B cell (primary cell): ENCODE measurements at regions of chr22 and their contacts with region 1.

Region 1: DNA sequence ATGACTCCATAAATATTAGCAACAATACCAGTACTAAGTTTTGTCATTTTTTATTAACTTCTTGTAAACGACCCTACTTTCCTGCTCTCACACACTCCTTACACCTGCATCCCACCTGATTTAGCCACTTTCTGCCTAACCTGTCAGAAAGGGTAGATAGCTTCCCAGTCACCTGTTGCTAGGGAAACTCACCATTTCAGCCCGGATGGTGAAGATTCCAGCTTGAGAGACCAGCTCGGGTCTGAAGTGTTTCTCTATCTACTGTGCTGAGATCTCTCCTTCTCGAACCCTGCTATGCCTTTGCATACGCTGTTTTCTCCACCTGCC is at the start of gene PARVG:
- DNase-seq: peak; percentile 86
- ATAC-seq: peak; percentile 67
- H3K4me3 ChIP-seq: peak within 1 kb of the TSS; percentile 70 to 98 (median 92)
- H3K4me3 Mint-ChIP-seq: peak within 1 kb of the TSS; percentile 94
- H3K27ac ChIP-seq: peak within 1 kb of the TSS; percentile 93 to 95
- H3K27ac Mint-ChIP-seq: peak within 1 kb of the TSS; percentile 95
- H3K4me1 ChIP-seq: peaks cover 19 to 39% of the 10 kb centered on the region in 2 donors
- H3K4me1 Mint-ChIP-seq: peaks cover 36% of the 10 kb centered on the region
- H3K27me3 ChIP-seq: no peaks in the 10 kb centered on the region
- H3K27me3 Mint-ChIP-seq: no peaks in the 10 kb centered on the region
- CTCF ChIP-seq: no peak
- total RNA-seq, gene PARVG: 247 and 271 TPM in 2 replicates

Region 2: GRCh38 chr22:42702675-42703074 is 1478.0 kb before region 1 on chr22:
- CTCF ChIA-PET with region 1: no interaction called
- POLR2A ChIA-PET with region 1: no interaction called
- intact Hi-C with region 1: no loop called
- DNase-seq: no peak
- ATAC-seq: no peak
- H3K4me3 ChIP-seq: no peak overlapping the region
- H3K4me3 Mint-ChIP-seq: no peak overlapping the region
- H3K27ac ChIP-seq: no peak overlapping the region
- H3K27ac Mint-ChIP-seq: no peak overlapping the region
- H3K4me1 ChIP-seq: no peaks in the 10 kb centered on the region
- H3K4me1 Mint-ChIP-seq: peaks cover 3% of the 10 kb centered on the region
- H3K27me3 ChIP-seq: peaks cover 0 to 14% (median 0%) of the 10 kb centered on the region in 4 experiments
- H3K27me3 Mint-ChIP-seq: peaks cover 4% of the 10 kb centered on the region
- CTCF ChIP-seq: no peak

Region 3: GRCh38 chr22:43812149-43812842 is 368.4 kb before region 1 on chr22 and contains the start of gene EFCAB6:
- CTCF ChIA-PET with region 1: no interaction called
- POLR2A ChIA-PET with region 1: no interaction called
- intact Hi-C with region 1: loop called (anchors 5 kb)
- DNase-seq: peak; percentile 94
- ATAC-seq: peak; percentile 95
- H3K4me3 ChIP-seq: peak within 1 kb of the TSS; percentile 39 to 92 (median 77)
- H3K4me3 Mint-ChIP-seq: peak within 1 kb of the TSS; percentile 94
- H3K27ac ChIP-seq: peak within 1 kb of the TSS; percentile 35 to 86
- H3K27ac Mint-ChIP-seq: peak within 1 kb of the TSS; percentile 85
- H3K4me1 ChIP-seq: peaks cover 12 to 17% of the 10 kb centered on the region in 2 donors
- H3K4me1 Mint-ChIP-seq: peaks cover 28% of the 10 kb centered on the region
- H3K27me3 ChIP-seq: no peaks in the 10 kb centered on the region
- H3K27me3 Mint-ChIP-seq: peaks cover 5% of the 10 kb centered on the region
- CTCF ChIP-seq: no peak
- total RNA-seq, gene EFCAB6: 0.07 and 0.39 TPM in 2 replicates

Region 4: GRCh38 chr22:44159221-44159620 is 21.4 kb before region 1 on chr22:
- CTCF ChIA-PET with region 1: no interaction called
- POLR2A ChIA-PET with region 1: no interaction called
- intact Hi-C with region 1: no loop called
- DNase-seq: no peak
- ATAC-seq: no peak
- H3K4me3 ChIP-seq: no peak overlapping the region
- H3K4me3 Mint-ChIP-seq: no peak overlapping the region
- H3K27ac ChIP-seq: no peak overlapping the region
- H3K27ac Mint-ChIP-seq: no peak overlapping the region
- H3K4me1 ChIP-seq: no peaks in the 10 kb centered on the region
- H3K4me1 Mint-ChIP-seq: no peaks in the 10 kb centered on the region
- H3K27me3 ChIP-seq: no peaks in the 10 kb centered on the region
- H3K27me3 Mint-ChIP-seq: no peaks in the 10 kb centered on the region
- CTCF ChIP-seq: no peak

Region 5: GRCh38 chr22:44192098-44192810 is 11.6 kb after region 1 on chr22:
- CTCF ChIA-PET with region 1: interaction called, 7 read pairs
- POLR2A ChIA-PET with region 1: interaction called, 28 read pairs
- intact Hi-C with region 1: loop called (anchors 1 kb)
- DNase-seq: peak; percentile 50
- ATAC-seq: no peak
- H3K4me3 ChIP-seq: no peak overlapping the region
- H3K4me3 Mint-ChIP-seq: no peak overlapping the region
- H3K27ac ChIP-seq: no peak overlapping the region
- H3K27ac Mint-ChIP-seq: no peak overlapping the region
- H3K4me1 ChIP-seq: peaks cover 33 to 57% of the 10 kb centered on the region in 2 donors
- H3K4me1 Mint-ChIP-seq: peaks cover 64% of the 10 kb centered on the region
- H3K27me3 ChIP-seq: no peaks in the 10 kb centered on the region
- H3K27me3 Mint-ChIP-seq: no peaks in the 10 kb centered on the region
- CTCF ChIP-seq: no peak

Region 6: DNA sequence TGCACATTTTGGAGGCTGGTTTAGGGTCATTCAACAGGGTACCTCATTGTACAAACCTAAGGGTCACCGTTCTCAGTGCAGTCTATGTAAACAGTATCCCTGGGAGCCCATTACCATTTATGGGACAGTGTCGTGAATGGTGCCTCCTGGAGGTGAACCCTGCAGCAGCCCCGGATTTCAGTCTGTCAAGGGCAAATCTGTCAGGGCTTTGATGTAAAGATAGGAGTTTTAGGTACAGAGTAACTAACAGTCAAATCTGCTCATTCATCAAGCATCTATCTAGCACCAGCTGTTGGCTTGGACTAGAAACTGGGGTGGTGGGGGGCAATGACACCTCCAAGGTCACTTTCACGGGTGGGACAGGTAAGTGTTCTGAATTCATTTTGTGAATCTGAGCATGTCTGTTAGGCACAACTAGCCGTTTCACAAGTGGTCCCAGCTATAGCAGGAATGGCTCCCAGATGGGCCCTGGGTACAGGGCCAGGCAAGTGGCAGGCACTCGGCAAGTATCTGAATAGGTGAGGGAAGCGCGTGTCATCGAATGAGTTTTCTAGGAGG is 63.7 kb after region 1 on chr22:
- CTCF ChIA-PET with region 1: no interaction called
- POLR2A ChIA-PET with region 1: no interaction called
- intact Hi-C with region 1: no loop called
- DNase-seq: no peak
- ATAC-seq: no peak
- H3K4me3 ChIP-seq: no peak overlapping the region
- H3K4me3 Mint-ChIP-seq: no peak overlapping the region
- H3K27ac ChIP-seq: no peak overlapping the region
- H3K27ac Mint-ChIP-seq: no peak overlapping the region
- H3K4me1 ChIP-seq: no peaks in the 10 kb centered on the region
- H3K4me1 Mint-ChIP-seq: no peaks in the 10 kb centered on the region
- H3K27me3 ChIP-seq: peaks cover 0 to 15% (median 3%) of the 10 kb centered on the region in 4 experiments
- H3K27me3 Mint-ChIP-seq: peaks cover 52% of the 10 kb centered on the region
- CTCF ChIP-seq: no peak

Region 7: DNA sequence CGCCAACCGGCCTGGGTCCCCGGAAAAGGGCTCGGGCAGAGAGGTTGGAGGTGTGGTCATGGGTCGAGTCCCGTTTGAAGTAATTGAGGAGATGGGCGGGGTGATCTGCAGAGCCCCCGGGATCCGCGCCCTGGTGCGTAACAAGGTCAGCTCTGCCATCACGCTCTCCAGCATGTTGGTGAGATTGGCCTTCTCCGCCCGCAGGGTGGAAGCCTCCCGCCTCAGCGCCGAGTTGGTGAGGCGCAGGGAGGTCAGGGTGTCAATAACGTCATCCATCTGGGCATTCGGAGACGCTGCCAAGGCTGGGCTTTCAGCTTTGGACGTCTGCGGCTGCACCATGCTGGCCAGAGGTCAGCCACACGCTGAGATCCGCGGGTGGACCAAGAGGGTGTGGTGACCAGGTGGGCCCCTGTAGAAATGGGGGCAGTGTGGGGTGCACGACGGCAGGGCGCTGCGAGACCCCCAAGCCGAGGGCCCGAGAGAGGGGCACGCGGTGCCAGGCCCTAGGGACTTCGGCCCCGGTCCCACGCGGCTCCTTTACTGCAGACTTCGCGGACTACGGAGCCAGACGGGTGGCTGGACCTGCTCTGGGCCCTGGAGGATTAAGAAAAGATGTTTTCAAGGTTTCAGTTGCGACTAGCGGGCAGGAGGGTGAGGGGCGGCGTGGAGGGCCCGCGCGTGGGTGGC is 316.7 kb after region 1 on chr22:
- CTCF ChIA-PET with region 1: no interaction called
- POLR2A ChIA-PET with region 1: no interaction called
- intact Hi-C with region 1: loop called (anchors 5 kb)
- DNase-seq: no peak
- ATAC-seq: no peak
- H3K4me3 ChIP-seq: peak overlapping the region in 4 of 5 experiments; percentile 19 to 68 (median 52)
- H3K4me3 Mint-ChIP-seq: peak overlapping the region; percentile 83
- H3K27ac ChIP-seq: peak overlapping the region in 1 of 2 donors; percentile 70
- H3K27ac Mint-ChIP-seq: peak overlapping the region; percentile 50
- H3K4me1 ChIP-seq: peaks cover 8 to 9% of the 10 kb centered on the region in 2 donors
- H3K4me1 Mint-ChIP-seq: peaks cover 8% of the 10 kb centered on the region
- H3K27me3 ChIP-seq: peaks cover 0 to 17% (median 7%) of the 10 kb centered on the region in 4 experiments
- H3K27me3 Mint-ChIP-seq: peaks cover 6% of the 10 kb centered on the region
- CTCF ChIP-seq: no peak